ENCODE measurements at regions of chr4 and their contacts with region 1.

Region 1: GRCh38 chr4:86934771-86935565 is at the start of gene AFF1:
- DNase-seq: peak; percentile 94 to 96
- ATAC-seq: peak; percentile 93 to 97 (median 94)
- H3K4me3 ChIP-seq: peak within 1 kb of the TSS; percentile 52 to 99 (median 94)
- H3K27ac ChIP-seq: peak within 1 kb of the TSS; percentile 94 to 100 (median 98)
- H3K4me1 ChIP-seq: peaks cover 0 to 52% (median 35%) of the 10 kb centered on the region in 9 donors
- H3K27me3 ChIP-seq: no peaks in the 10 kb centered on the region
- CTCF ChIP-seq: peak; percentile 22 to 75 (median 61)
- total RNA-seq, gene AFF1: 59.5 to 90.2 (median 77.3) TPM

Region 2: GRCh38 chr4:86706923-86707597 is 227.9 kb before region 1 on chr4:
- intact Hi-C with region 1: no loop called
- DNase-seq: no peak
- ATAC-seq: peak in 3 of 8 donors; percentile 62 to 81 (median 80)
- H3K4me3 ChIP-seq: no peak overlapping the region
- H3K27ac ChIP-seq: no peak overlapping the region
- H3K4me1 ChIP-seq: no peaks in the 10 kb centered on the region
- H3K27me3 ChIP-seq: no peaks in the 10 kb centered on the region
- CTCF ChIP-seq: no peak

Region 3: DNA sequence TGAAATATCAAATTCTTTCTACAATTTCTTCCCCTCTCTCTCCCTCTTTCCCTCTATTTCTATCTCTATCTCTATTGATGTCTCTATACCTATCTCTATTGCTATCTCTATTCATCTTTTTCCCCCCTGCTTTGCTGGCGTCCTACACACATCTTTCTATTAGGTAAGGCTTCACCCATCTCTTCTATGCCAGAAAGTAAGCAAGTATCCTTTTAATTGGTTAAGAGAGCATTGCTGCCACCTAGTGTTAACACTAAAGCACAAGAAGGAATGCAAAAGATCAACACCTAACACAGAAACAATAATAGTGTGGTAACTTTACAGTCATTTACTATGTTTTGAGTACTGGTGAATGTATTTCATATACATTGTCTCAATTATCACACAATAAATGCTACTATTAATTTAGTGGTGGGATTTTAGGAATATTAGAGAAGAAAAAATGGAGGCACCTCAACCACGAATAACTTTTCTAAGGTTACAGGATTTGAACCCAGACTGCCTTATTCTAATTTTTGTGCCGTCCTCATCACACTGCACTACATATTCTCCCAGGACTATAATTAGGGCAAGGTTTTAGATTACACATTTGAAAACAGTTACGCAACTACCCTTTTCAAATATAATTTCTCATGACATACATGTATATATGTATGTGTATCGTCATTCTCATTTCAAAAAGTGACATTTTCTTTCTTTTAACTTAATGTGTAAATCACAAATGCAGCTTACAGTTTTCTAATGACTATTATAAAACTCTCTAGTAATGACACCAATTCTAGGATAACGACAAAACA is 39.1 kb before region 1 on chr4:
- intact Hi-C with region 1: no loop called
- DNase-seq: peak in 1 of 2 donors; percentile 53
- ATAC-seq: peak in 5 of 8 donors; percentile 36 to 59 (median 55)
- H3K4me3 ChIP-seq: no peak overlapping the region
- H3K27ac ChIP-seq: no peak overlapping the region
- H3K4me1 ChIP-seq: peaks cover 0 to 26% (median 0%) of the 10 kb centered on the region in 9 donors
- H3K27me3 ChIP-seq: peaks cover 0 to 16% (median 0%) of the 10 kb centered on the region in 7 donors
- CTCF ChIP-seq: peak; percentile 50 to 89 (median 80)

Region 4: DNA sequence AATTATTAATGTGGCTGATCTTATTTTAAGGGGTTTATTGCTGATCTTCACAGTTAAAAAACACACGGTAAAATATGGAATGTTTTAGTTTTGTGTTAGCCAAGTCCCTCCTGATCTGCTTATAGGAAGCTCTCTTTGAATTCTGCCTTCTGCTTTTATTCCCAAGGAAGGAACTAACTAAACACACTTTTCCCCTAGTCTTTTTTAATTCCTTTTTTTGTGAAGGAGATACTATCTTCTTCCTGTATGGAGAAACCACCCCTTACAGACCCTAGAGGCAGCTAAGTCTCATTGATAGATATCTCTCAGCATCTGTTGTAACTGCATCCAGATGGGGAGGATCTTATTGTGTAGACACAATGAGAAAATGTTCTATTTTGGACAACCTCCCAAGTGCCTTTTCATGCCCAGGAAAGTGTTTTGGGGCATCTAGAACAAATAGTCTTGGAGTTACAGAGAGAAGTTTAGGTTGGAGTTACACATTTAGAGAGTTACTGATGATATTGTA is 64.2 kb after region 1 on chr4:
- intact Hi-C with region 1: loop called in 1 of 10 experiments (anchors 10 kb)
- DNase-seq: no peak
- ATAC-seq: no peak
- H3K4me3 ChIP-seq: no peak overlapping the region
- H3K27ac ChIP-seq: peak overlapping the region in 8 of 10 donors; percentile 22 to 80 (median 57)
- H3K4me1 ChIP-seq: peaks cover 0 to 44% (median 31%) of the 10 kb centered on the region in 9 donors
- H3K27me3 ChIP-seq: no peaks in the 10 kb centered on the region
- CTCF ChIP-seq: no peak